ENCODE measurements at regions of chr12 and their contacts with region 1.

Region 1: GRCh38 chr12:30754709-30755394 is at the start of gene CAPRIN2:
- DNase-seq: peak; percentile 99
- total RNA-seq, gene CAPRIN2: 29.0 TPM

Region 2: DNA sequence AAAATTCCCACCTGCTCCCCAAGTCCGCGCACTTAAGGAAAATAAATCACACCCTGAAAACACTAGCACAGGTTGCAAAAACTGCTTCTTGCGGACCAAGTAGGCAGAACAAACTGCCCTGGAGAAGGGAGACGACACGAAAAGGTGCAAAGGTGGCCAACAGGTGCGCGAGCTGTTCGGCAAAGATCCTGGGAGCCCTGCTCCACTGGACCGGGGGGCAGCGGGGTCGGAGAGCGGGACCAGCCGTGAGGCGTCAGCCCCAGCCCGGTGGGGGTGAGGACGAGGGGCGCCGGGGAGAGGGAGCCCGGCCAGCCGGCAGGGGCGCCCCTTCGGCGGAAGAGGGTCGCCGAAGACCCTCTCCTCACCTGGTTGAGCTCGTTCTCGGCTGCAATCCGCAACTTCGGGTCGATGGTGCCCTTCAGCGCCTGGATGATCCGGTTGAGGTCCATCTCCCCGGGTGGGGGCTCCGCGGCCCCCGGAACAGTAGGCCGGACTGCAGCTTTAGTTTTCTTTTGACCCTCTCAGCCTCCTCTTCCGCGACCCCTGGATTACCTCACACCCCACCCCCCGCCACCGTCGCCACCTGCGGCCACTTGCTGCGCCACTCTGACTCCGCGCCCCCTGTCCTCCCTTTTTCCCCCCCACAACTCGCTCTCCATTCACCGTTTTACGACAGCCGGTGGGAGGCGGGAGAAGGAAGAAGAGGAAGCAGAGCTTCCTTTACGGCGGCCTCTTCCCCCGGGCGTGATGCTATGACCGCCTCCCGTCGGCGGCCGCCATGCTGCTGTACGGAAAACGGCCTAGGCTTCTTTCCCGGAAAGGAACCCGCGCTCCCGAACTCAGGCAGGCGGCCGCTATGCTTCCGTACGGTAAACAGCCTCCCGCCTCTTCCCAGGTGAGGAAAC is 59.4 kb before region 1 on chr12 and contains the start of gene IPO8:
- intact Hi-C with region 1: loop called (anchors 5 kb)
- DNase-seq: peak; percentile 95
- total RNA-seq, gene IPO8: 24.3 TPM

Region 3: GRCh38 chr12:30794591-30795409 is 39.9 kb after region 1 on chr12:
- intact Hi-C with region 1: loop called (anchors 5 kb)
- DNase-seq: no peak